Esophagus muscularis mucosa (tissue), 4 donors: ENCODE measurements at regions of chr3 and their contacts with region 1.

Region 1: GRCh38 chr3:22960105-22960984 is 242.8 kb upstream of the UBE2E2 start:
- DNase-seq: no peak
- H3K4me3 ChIP-seq: peak overlapping the region in 2 of 4 donors; percentile 13 to 44
- H3K27ac ChIP-seq: no peak overlapping the region
- H3K4me1 ChIP-seq: peaks cover 3 to 15% (median 12%) of the 10 kb centered on the region in 4 donors
- H3K27me3 ChIP-seq: no peaks in the 10 kb centered on the region
- CTCF ChIP-seq: peak; percentile 76 to 84 (median 82)
- EP300 ChIP-seq: no peak
- POLR2A ChIP-seq: no peak

Region 2: DNA sequence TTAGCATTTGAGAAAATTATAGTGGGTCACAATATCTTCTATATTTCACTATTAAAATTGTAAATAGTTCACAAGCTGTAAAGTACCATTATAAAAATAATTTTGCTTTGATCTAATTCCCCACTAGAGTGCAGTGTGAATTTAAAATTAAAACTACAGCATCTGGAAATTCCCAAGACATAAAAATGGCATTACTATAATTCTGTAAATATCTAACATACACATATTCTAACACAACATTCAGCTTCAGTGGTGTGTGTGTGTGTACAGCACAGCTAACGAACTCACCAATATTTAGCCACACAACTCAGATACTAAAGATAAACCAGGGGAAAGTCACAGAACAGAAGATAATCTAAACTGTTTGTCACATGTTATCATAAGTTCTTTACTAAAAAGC is 784.4 kb before region 1 on chr3:
- intact Hi-C with region 1: loop called (anchors 5 kb)
- DNase-seq: no peak
- H3K4me3 ChIP-seq: no peak overlapping the region
- H3K27ac ChIP-seq: no peak overlapping the region
- H3K4me1 ChIP-seq: no peaks in the 10 kb centered on the region
- H3K27me3 ChIP-seq: no peaks in the 10 kb centered on the region
- CTCF ChIP-seq: peak in 1 of 3 experiments; percentile 29
- EP300 ChIP-seq: no peak
- POLR2A ChIP-seq: no peak

Region 3: GRCh38 chr3:22565393-22565792 is 395.0 kb before region 1 on chr3:
- intact Hi-C with region 1: loop called (anchors 2 kb)
- DNase-seq: no peak
- H3K4me3 ChIP-seq: no peak overlapping the region
- H3K27ac ChIP-seq: no peak overlapping the region
- H3K4me1 ChIP-seq: no peaks in the 10 kb centered on the region
- H3K27me3 ChIP-seq: no peaks in the 10 kb centered on the region
- CTCF ChIP-seq: no peak
- EP300 ChIP-seq: no peak
- POLR2A ChIP-seq: no peak

Region 4: DNA sequence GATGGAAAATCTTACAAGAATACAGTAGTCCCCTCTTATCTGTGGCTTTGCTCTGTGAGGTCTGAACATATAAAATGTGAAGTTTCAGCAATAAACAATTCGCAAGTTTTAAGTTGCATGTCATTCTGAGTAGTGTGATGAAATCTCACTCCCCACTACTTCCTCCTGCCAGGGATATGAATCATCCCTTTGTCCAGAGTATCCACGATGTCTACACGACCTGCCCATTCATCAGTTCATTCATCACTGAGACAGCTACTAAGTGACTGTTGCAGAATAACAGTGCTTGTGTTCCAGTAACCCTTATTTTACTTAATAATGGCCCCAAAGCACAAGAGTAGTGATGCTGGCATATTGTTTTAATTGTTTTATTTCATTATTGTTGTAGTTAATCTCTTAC is 246.4 kb before region 1 on chr3:
- intact Hi-C with region 1: no loop called
- DNase-seq: no peak
- H3K4me3 ChIP-seq: no peak overlapping the region
- H3K27ac ChIP-seq: peak overlapping the region in 1 of 4 donors; percentile 23
- H3K4me1 ChIP-seq: peaks cover 0 to 20% (median 15%) of the 10 kb centered on the region in 4 donors
- H3K27me3 ChIP-seq: no peaks in the 10 kb centered on the region
- CTCF ChIP-seq: no peak
- EP300 ChIP-seq: no peak
- POLR2A ChIP-seq: no peak

Region 5: GRCh38 chr3:22729985-22730384 is 230.4 kb before region 1 on chr3:
- intact Hi-C with region 1: loop called (anchors 2 kb)
- DNase-seq: no peak
- H3K4me3 ChIP-seq: no peak overlapping the region
- H3K27ac ChIP-seq: no peak overlapping the region
- H3K4me1 ChIP-seq: peaks cover 0 to 1% (median under 1%) of the 10 kb centered on the region in 4 donors
- H3K27me3 ChIP-seq: no peaks in the 10 kb centered on the region
- CTCF ChIP-seq: peak in 2 of 3 experiments; percentile 17 to 30
- EP300 ChIP-seq: no peak
- POLR2A ChIP-seq: no peak

Region 6: DNA sequence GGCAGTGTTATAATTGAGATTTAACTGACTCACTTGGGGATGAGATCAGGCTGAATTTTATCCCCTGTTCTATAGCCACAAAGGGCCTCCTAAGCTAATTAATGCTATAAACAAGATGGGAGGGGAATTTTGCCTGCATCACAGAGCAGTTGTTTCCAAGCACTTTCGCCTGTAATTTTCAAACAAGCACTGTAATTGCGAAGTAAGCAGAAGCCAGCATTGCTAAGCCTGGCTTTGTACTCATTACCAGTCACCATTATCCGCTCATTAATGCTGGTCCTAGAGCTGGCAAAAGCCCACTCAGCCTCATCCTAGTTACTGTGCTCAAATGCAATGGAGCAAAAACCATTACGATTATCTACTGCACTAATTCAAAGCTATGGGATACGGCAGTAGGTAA is 113.8 kb before region 1 on chr3:
- intact Hi-C with region 1: no loop called
- DNase-seq: no peak
- H3K4me3 ChIP-seq: no peak overlapping the region
- H3K27ac ChIP-seq: no peak overlapping the region
- H3K4me1 ChIP-seq: no peaks in the 10 kb centered on the region
- H3K27me3 ChIP-seq: no peaks in the 10 kb centered on the region
- CTCF ChIP-seq: no peak
- EP300 ChIP-seq: no peak
- POLR2A ChIP-seq: no peak

Region 7: DNA sequence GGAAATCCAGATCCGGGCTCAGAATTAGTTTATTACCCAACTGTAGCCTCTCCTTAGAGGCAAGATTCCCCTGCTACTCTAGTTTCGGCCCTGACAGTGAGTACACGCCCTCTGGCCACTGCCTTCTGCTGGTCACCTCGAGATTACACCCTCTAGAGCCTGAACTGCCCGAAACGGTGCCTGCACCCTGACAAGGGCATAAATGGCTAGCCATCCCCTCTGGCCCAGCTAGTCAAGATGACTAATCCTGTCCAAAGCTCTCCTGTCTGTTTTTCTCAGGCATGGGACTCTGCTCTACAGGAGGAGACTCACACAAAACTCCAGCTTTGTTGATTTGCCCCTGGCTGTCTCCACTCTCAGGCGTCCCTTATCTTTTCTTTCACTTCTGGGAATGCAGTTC is 92.3 kb after region 1 on chr3:
- intact Hi-C with region 1: no loop called
- DNase-seq: no peak
- H3K4me3 ChIP-seq: no peak overlapping the region
- H3K27ac ChIP-seq: no peak overlapping the region
- H3K4me1 ChIP-seq: peaks cover 0 to 18% (median 15%) of the 10 kb centered on the region in 4 donors
- H3K27me3 ChIP-seq: no peaks in the 10 kb centered on the region
- CTCF ChIP-seq: no peak
- EP300 ChIP-seq: no peak
- POLR2A ChIP-seq: no peak